Tibial artery (tissue), 4 donors: ENCODE measurements at regions of chr18 and their contacts with region 1.

Region 1: DNA sequence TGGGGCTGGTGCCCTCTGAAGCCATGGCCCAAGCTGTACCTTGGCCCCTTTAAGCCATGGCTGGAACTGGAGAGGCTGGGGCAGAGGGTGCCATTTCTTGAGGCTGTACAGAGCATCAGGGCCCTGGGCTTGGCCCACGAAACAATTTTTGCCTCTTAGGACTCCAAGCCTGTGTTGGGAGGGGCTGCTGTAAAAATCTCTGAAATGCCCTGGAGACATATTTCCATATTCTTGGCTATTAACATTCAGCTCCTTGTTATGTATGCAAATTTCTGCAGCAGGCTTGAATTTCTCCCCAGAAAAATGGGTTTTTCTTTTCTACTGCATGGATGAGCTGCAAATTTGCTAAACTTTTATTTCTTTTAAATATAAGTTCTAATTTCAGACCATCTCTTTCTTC is 834.0 kb downstream of the DSC3 start:
- DNase-seq: no peak
- H3K4me3 ChIP-seq: no peak overlapping the region
- H3K27ac ChIP-seq: no peak overlapping the region
- H3K4me1 ChIP-seq: no peaks in the 10 kb centered on the region
- H3K27me3 ChIP-seq: no peaks in the 10 kb centered on the region
- CTCF ChIP-seq: no peak

Region 2: DNA sequence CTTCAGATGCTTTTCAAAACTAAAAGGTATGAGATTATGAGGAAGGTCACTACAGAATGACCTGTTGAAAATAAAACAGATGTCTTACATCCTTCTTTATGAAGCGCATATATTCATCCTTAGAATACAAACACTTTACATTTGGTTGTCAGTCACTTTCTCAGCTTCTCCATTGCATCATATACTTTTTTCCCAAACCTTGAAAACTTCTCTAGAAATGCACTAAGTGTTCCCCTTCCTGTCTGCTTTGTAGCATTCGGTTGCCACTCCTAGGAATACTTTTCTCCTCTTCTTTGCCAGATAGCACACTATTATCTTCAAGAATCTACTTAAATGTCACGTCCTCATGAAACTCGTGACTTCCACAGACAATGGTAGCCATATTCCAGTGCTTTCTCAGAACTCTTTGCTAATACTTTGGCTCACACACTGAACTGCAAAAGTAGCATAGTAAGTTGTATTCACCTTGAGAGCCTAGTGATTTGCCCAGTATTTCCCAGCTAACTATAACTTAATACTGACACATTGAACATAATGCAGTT is 926.5 kb after region 1 on chr18:
- intact Hi-C with region 1: loop called (anchors 5 kb)
- DNase-seq: no peak
- H3K4me3 ChIP-seq: no peak overlapping the region
- H3K27ac ChIP-seq: no peak overlapping the region
- H3K4me1 ChIP-seq: no peaks in the 10 kb centered on the region
- H3K27me3 ChIP-seq: peaks cover 0 to 3% of the 10 kb centered on the region in 2 donors
- CTCF ChIP-seq: no peak